Activated CD4-positive, alpha-beta T cell treated with anti-CD3 and anti-CD28 coated beads for 36 hours (primary cell): ENCODE measurements at regions of chr5 and their contacts with region 1.

Region 1: DNA sequence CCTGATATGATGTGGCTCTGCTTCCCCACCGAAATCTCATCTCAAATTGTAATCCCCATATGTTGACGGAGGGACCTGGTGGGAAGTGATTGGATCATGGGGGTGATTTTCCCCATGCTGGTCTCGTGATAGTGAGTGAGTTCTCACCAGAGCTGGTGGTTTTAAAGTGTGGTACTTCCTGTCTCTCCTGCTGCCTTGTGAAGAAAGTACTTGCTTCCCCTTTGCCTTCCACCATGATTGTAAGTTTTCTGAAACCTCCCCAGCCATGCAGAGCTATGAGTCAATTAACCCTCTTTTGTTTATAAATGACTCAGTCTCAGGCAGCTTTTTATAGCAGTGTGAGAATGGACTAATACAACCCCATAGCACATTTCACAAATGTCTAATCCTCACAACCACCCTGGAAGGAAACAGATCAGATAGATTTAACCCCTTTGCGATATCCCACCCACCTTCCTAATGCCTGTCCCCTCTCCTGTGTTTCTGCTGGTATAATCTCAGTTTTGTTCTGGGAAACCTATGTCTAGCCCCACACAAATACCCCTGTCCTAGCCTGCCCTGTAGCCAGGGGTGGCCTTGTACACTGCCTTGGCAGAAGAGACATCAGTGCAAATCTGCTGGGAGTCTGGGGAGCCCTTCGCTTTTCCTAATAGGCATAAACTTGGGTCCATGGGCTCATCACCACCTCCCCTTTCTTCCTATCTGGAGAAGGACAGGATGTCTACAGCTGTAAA is 157.0 kb upstream of the RAI14 start:
- DNase-seq: peak; percentile 40
- ATAC-seq: peak; percentile 96
- H3K4me3 Mint-ChIP-seq: no peak overlapping the region
- H3K27ac Mint-ChIP-seq: peak overlapping the region; percentile 61
- H3K4me1 Mint-ChIP-seq: peaks cover 12% of the 10 kb centered on the region
- H3K27me3 Mint-ChIP-seq: peaks cover 21% of the 10 kb centered on the region

Region 2: GRCh38 chr5:32984851-32985610 is 1514.1 kb before region 1 on chr5:
- CTCF ChIA-PET with region 1: no interaction called
- POLR2A ChIA-PET with region 1: no interaction called
- intact Hi-C with region 1: no loop called
- DNase-seq: no peak
- ATAC-seq: no peak
- H3K4me3 Mint-ChIP-seq: no peak overlapping the region
- H3K27ac Mint-ChIP-seq: no peak overlapping the region
- H3K4me1 Mint-ChIP-seq: no peaks in the 10 kb centered on the region
- H3K27me3 Mint-ChIP-seq: no peaks in the 10 kb centered on the region

Region 3: DNA sequence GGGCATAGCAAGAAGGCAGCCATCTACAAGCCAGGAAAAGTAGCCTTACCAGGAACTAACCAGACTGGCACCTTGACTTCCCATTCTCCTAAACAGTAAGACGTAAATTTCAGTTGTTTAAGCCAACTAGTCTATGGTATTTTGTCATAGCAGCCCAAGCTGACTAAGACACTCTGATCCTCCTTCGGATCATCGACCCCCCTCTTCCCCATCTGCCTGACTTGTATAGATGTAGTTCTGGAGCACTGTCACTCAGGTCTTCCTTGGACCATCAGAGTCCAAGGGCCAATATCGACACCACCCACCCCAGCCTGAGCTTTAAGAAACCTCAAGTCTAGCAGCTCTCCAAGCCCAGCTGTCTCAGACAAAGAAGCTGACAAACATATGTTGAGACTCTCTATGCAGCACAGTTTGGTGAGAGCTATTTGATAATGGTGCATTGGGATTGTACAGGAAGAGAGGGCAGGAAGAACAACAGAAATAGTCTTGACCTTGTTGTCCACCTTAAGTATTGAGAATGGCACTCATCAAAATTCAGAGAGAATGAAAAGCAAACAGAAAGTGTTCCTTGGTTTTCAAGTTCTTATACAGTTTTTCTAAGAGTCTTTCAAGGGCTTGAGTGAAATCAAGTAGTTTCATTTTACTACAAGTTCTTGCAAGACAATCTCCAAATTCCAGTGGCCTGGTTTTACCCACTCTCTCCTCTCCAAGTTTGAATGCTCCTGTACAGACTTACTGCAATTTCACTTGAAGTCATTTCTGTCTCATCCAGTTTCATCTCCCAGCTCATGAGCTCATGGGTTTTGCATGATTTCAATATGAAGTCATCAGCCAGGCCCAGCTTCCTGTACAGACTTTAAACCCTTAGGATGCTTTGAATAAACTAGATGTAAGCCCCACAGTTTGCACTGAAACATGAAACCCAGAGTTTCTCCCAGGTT is 34.7 kb after region 1 on chr5:
- CTCF ChIA-PET with region 1: no interaction called
- POLR2A ChIA-PET with region 1: no interaction called
- intact Hi-C with region 1: loop called (anchors 2 kb)
- DNase-seq: peak; percentile 56
- ATAC-seq: peak; percentile 77
- H3K4me3 Mint-ChIP-seq: no peak overlapping the region
- H3K27ac Mint-ChIP-seq: peak overlapping the region; percentile 76
- H3K4me1 Mint-ChIP-seq: peaks cover 41% of the 10 kb centered on the region
- H3K27me3 Mint-ChIP-seq: peaks cover 5% of the 10 kb centered on the region